PC-9 (cell line): ENCODE measurements at regions of chr2 and their contacts with region 1.

Region 1: DNA sequence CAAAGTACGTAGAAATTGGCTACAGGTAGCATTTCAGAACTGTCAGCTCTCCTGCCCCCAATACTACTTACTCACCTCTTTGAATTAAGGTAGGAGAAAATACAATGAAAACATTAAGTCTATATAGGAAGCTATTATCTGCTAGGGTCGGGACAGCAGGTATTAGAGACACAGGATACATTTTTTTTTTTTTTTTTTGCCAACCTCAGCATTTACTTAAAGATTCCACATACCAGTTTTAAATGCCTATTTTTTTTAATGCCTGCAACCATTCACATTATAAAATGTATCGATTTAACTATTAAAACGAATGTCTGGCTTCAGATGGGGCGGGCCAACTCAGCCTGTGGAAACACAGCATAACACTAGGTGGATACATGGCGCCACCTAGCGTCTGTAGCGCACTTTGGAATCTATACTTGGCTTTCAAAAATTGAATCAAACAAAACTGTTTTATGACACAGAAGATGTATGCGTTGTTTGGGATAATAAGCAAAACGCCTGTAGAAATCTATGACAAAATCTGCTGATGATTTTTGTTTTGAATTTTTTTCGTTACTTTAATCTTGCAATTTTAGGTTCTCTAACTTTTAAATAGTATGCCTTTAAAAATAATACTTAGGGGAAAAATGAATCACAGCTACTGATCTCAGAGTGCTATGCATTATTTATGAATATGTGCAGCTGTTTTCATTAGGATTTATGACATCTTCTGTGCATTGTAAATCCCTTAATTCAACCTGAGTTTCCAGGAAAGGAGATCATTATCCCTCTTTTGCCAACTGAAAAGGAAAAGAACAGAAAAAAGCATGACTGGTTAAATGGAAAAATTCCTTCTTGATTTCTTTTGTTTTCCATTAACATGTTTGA is 261.0 kb downstream of the NYAP2 start:
- DNase-seq: peak; percentile 54 to 78
- H3K4me3 ChIP-seq: no peak overlapping the region
- H3K27ac ChIP-seq: no peak overlapping the region
- H3K4me1 ChIP-seq: no peaks in the 10 kb centered on the region
- H3K27me3 ChIP-seq: no peaks in the 10 kb centered on the region
- CTCF ChIP-seq: peak; percentile 100

Region 2: GRCh38 chr2:224357098-224357901 is 1303.2 kb before region 1 on chr2:
- CTCF ChIA-PET with region 1: no interaction called
- POLR2A ChIA-PET with region 1: no interaction called
- intact Hi-C with region 1: loop called (anchors 1 kb)
- DNase-seq: peak; percentile 72 to 77
- H3K4me3 ChIP-seq: no peak overlapping the region
- H3K27ac ChIP-seq: no peak overlapping the region
- H3K4me1 ChIP-seq: peaks cover 16% of the 10 kb centered on the region
- H3K27me3 ChIP-seq: no peaks in the 10 kb centered on the region
- CTCF ChIP-seq: peak; percentile 100

Region 3: GRCh38 chr2:224973112-224974016 is 687.1 kb before region 1 on chr2:
- CTCF ChIA-PET with region 1: interaction called, 10 read pairs
- POLR2A ChIA-PET with region 1: no interaction called
- intact Hi-C with region 1: no loop called
- DNase-seq: peak in 1 of 2 experiments; percentile 73
- H3K4me3 ChIP-seq: no peak overlapping the region
- H3K27ac ChIP-seq: no peak overlapping the region
- H3K4me1 ChIP-seq: peaks cover 31% of the 10 kb centered on the region
- H3K27me3 ChIP-seq: no peaks in the 10 kb centered on the region
- CTCF ChIP-seq: no peak

Region 4: DNA sequence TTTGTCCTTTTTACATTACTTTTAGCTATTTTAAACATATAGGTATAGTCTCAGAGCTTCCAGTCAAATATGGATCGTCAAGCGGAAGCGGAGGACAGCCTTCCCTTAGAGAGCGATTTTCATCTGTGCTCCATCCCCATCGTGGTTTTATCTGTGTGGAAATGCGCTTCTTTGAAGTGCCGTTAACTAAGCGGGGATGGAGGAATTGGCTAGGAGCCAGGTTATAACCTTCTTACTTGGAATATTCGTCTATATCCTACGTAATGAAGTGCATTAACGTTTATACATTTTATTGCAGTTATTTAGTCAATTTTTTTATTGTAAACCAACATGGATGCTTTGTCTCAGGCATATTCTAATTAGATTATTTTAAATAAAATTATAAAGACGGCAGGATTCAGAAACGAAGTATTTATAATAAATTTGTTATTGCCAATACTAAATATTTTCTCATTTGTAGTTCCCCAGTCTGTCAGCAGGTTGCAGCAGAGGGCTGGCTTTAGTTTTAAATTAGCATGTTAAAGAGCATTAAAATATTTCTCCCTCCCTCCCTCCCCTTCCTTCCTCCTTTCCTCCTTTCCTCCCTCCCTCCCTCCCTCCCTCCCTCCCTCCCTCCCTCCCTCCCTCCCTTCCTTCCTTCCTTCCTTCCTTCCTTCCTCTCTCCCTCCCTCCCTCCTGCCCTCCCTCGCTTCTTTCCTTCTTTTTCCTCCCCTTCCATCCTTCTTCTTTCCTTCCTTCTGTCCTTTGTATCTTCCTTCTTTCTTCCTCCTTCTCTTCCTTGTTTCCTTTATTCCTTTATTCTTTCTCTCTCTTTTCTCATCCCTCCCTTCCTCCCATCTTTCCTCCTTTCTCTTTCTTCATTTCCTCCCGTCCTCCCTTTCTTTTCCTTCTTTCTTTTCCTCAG is 537.7 kb before region 1 on chr2:
- CTCF ChIA-PET with region 1: interaction called, 5 read pairs
- POLR2A ChIA-PET with region 1: no interaction called
- intact Hi-C with region 1: loop called (anchors 1 kb)
- DNase-seq: peak in 1 of 2 experiments; percentile 24
- H3K4me3 ChIP-seq: no peak overlapping the region
- H3K27ac ChIP-seq: no peak overlapping the region
- H3K4me1 ChIP-seq: peaks cover 15% of the 10 kb centered on the region
- H3K27me3 ChIP-seq: no peaks in the 10 kb centered on the region
- CTCF ChIP-seq: peak; percentile 78

Region 5: GRCh38 chr2:225649274-225649673 is 11.2 kb before region 1 on chr2:
- CTCF ChIA-PET with region 1: interaction called, 10 read pairs
- POLR2A ChIA-PET with region 1: no interaction called
- intact Hi-C with region 1: no loop called
- DNase-seq: no peak
- H3K4me3 ChIP-seq: no peak overlapping the region
- H3K27ac ChIP-seq: no peak overlapping the region
- H3K4me1 ChIP-seq: no peaks in the 10 kb centered on the region
- H3K27me3 ChIP-seq: no peaks in the 10 kb centered on the region
- CTCF ChIP-seq: no peak

Region 6: DNA sequence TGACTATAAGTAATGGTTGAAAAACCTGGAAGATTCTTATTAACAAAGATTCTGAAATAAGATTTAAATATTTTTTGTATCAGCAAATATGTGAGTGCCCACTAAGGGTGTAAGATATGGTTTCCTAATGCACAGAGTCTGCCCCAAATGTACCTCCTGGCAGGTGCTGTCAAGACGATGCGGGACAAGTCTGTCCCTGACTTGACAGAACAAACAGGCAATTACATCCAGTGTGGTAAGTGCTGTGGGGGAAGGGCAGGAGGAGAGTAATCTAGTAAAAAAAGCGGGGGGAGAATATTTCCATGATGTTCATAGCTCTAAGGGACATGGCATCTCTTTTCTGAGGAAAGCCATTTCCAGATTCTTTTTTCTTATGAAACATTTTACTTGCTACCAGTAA is 1376.0 kb after region 1 on chr2:
- CTCF ChIA-PET with region 1: interaction called, 12 read pairs
- POLR2A ChIA-PET with region 1: no interaction called
- intact Hi-C with region 1: no loop called
- DNase-seq: no peak
- H3K4me3 ChIP-seq: no peak overlapping the region
- H3K27ac ChIP-seq: no peak overlapping the region
- H3K4me1 ChIP-seq: no peaks in the 10 kb centered on the region
- H3K27me3 ChIP-seq: no peaks in the 10 kb centered on the region
- CTCF ChIP-seq: no peak